ENCODE measurements at regions of chr22 and their contacts with region 1.

Region 1: GRCh38 chr22:37218771-37219411 is 6.6 kb upstream of the SSTR3 start:
- DNase-seq: peak; percentile 85
- ATAC-seq: peak; percentile 74
- H3K4me3 Mint-ChIP-seq: peak overlapping the region; percentile 76
- H3K27ac Mint-ChIP-seq: peak overlapping the region; percentile 94
- H3K4me1 Mint-ChIP-seq: peaks cover 74% of the 10 kb centered on the region
- H3K27me3 Mint-ChIP-seq: no peaks in the 10 kb centered on the region
- CTCF ChIP-seq: no peak

Region 2: DNA sequence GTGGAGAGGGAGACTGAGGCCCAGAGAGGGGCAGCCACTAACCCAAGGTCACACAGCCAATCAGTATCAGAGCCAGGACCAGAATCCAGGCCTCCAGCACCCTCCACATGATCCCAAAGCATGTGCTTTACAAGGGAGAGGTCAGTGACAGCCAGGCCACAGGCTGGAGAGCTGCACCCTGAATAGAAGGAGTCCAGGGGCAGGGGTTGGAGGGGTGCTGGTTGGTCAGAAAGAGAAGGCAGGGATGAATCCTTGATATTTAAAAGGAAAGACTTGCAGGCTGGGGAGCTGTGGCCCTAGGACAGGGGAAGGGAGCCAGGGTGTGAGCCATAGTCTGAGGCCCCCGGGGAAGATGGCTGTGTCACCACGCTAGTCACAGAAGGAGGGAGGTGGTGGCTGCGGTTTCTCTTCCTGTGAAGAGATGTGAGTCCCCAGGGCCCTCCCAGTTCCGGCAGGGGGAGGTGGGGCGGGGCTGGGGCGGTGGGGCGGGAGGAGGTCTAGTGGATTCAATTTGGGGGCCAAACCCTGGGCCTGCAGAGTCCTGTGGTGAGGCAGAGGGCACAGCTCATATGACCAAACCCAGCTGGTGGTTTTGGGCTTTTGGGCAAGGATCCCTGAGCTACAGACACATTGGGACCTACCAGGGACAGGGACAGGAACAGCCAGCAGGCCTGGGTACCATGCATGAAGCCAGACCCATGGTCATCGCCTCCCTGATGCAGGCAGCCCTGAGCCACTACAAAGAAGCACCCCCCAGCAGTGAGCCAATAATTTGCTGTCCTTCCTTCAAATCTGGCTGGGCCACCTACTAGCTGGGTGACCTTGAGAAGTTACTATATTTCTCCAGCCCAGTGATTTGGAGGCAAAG is 11.1 kb after region 1 on chr22:
- CTCF ChIA-PET with region 1: interaction called, 8 read pairs
- POLR2A ChIA-PET with region 1: interaction called, 48 read pairs
- intact Hi-C with region 1: no loop called
- DNase-seq: peak; percentile 98
- ATAC-seq: peak; percentile 61
- H3K4me3 Mint-ChIP-seq: peak overlapping the region; percentile 76
- H3K27ac Mint-ChIP-seq: peak overlapping the region; percentile 98
- H3K4me1 Mint-ChIP-seq: peaks cover 85% of the 10 kb centered on the region
- H3K27me3 Mint-ChIP-seq: no peaks in the 10 kb centered on the region
- CTCF ChIP-seq: no peak

Region 3: GRCh38 chr22:37237371-37238268 is 18.7 kb after region 1 on chr22:
- CTCF ChIA-PET with region 1: interaction called, 7 read pairs
- POLR2A ChIA-PET with region 1: interaction called, 61 read pairs
- intact Hi-C with region 1: no loop called
- DNase-seq: peak; percentile 22
- ATAC-seq: no peak
- H3K4me3 Mint-ChIP-seq: peak overlapping the region; percentile 98
- H3K27ac Mint-ChIP-seq: peak overlapping the region; percentile 97
- H3K4me1 Mint-ChIP-seq: peaks cover 84% of the 10 kb centered on the region
- H3K27me3 Mint-ChIP-seq: no peaks in the 10 kb centered on the region
- CTCF ChIP-seq: no peak

Region 4: GRCh38 chr22:37768273-37768672 is 549.4 kb after region 1 on chr22:
- CTCF ChIA-PET with region 1: no interaction called
- POLR2A ChIA-PET with region 1: no interaction called
- intact Hi-C with region 1: no loop called
- DNase-seq: no peak
- ATAC-seq: peak; percentile 60
- H3K4me3 Mint-ChIP-seq: no peak overlapping the region
- H3K27ac Mint-ChIP-seq: no peak overlapping the region
- H3K4me1 Mint-ChIP-seq: no peaks in the 10 kb centered on the region
- H3K27me3 Mint-ChIP-seq: no peaks in the 10 kb centered on the region
- CTCF ChIP-seq: peak; percentile 18